Activated CD4-positive, alpha-beta memory T cell treated with anti-CD3 and anti-CD28 coated beads for 36 hours (primary cell): ENCODE measurements at regions of chr10 and their contacts with region 1.

Region 1: GRCh38 chr10:128150045-128150493 is 23.8 kb upstream of the MKI67 start:
- DNase-seq: peak; percentile 82
- H3K4me3 Mint-ChIP-seq: peak overlapping the region; percentile 72
- H3K27ac Mint-ChIP-seq: no peak overlapping the region
- H3K4me1 Mint-ChIP-seq: peaks cover 20% of the 10 kb centered on the region
- H3K27me3 Mint-ChIP-seq: no peaks in the 10 kb centered on the region

Region 2: GRCh38 chr10:128078136-128078969 is 71.7 kb before region 1 on chr10:
- CTCF ChIA-PET with region 1: interaction called, 20 read pairs
- POLR2A ChIA-PET with region 1: no interaction called
- intact Hi-C with region 1: loop called (anchors 1 kb)
- DNase-seq: peak; percentile 57
- H3K4me3 Mint-ChIP-seq: no peak overlapping the region
- H3K27ac Mint-ChIP-seq: no peak overlapping the region
- H3K4me1 Mint-ChIP-seq: no peaks in the 10 kb centered on the region
- H3K27me3 Mint-ChIP-seq: no peaks in the 10 kb centered on the region

Region 3: DNA sequence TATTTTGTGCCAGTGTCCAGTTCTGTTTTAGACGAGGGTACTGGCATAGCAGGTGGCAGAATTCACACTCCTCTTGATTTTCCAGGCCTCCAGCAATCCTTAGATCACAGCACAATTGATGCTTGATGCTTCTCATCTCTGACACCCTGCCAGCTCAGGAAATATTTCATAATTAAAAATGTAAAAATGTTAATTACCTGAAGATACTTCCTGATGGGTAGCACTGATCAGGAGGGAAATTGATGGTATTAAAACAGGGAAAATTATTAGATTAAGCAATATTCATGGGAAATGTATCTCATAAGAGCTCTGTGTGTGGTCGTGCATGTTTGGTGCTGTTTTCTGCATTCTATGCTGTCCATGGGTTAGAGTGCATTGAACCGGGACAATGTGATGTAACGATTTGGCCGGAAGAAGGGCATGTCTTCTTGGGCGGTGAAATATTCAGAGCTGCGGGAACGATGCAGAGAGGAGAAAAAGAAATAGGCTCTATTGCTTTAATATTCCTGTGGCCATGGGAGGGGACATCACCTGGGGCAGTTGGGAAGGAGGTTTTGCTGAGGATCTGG is 19.8 kb after region 1 on chr10:
- CTCF ChIA-PET with region 1: no interaction called
- POLR2A ChIA-PET with region 1: no interaction called
- intact Hi-C with region 1: no loop called
- DNase-seq: no peak
- H3K4me3 Mint-ChIP-seq: no peak overlapping the region
- H3K27ac Mint-ChIP-seq: no peak overlapping the region
- H3K4me1 Mint-ChIP-seq: no peaks in the 10 kb centered on the region
- H3K27me3 Mint-ChIP-seq: peaks cover 9% of the 10 kb centered on the region